ENCODE measurements at regions of chr4 and their contacts with region 1.

Region 1: DNA sequence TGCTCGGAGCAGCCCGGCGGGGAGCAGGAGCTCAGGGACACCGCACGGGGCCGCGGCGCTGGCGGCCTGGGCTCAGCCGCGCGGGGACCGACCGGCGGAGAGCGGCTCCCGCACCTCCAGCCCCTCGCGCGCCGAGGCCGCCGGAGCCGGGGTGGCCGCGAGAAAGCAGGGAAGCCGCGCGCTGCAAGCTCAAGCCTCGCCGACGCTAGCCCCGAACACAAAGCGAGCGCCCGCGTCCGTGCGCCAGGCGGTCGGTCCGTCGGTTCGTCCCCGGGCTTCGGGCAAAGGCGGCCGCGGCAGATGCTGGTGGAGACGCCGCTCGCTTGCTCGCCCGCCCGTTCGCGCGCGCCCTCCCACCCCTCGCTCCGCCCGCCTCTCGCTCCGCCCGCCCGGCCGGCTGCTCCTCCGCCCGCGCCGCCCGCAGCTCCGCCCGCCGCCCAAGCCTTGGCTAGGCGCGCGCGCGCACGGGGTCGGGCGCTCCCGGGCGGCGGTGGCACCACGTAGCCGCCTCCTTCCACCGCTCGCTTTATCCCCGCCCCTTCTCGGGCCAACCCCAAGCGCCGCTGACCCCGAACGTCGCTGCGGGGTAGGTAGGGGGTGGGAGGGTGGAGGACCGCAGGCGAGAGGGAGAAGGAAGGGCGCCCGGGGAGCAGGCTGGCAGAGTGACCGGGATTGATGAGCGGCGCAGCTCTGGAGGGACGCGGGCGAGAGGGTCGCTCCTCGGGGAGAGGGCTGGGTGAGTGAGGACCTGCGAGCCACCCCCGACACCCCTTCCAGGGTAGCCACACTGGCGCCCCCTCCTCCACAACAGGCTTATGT is at the start of gene TSPAN5:
- DNase-seq: peak; percentile 79
- ATAC-seq: peak; percentile 54
- H3K4me3 ChIP-seq: peak within 1 kb of the TSS; percentile 86
- H3K27ac ChIP-seq: peak within 1 kb of the TSS; percentile 99
- H3K4me1 ChIP-seq: peaks cover 61% of the 10 kb centered on the region
- H3K27me3 ChIP-seq: no peaks in the 10 kb centered on the region
- CTCF ChIP-seq: no peak
- total RNA-seq, gene TSPAN5: 41.8 and 50.3 TPM in 2 replicates

Region 2: DNA sequence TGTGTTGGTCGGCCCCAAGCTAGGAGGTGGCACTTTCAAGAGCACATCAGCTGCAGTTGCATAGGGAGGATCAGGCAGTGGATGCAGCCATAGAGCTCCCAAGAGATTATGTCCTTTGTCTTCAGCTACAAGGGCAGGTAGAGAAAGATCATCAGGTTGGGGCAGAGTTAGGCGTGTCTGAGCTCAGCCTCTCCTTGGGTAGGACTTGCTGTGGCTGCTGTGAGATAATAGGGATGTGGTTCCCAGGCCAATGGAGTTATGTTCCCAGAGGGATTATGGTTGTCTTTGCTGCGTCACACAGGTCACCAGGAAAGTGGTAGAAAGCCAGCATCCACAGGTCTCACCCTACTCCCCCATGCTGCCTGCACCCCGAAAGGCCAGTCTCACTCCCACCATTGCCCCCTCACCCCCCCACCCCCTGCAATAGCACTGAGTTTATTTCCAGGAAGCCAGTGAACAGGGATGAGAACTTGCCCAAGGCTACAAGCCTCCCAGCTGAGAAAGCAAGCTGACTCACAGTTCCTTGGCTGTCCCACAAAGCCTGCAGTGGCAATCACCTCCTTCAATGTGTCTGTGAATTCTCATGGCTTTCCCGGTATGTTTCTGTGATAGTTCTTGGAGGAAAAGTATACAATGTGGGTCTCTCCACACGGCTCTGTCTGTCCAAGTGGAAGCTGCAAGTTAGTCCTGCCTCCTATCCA is 663.6 kb before region 1 on chr4:
- CTCF ChIA-PET with region 1: no interaction called
- POLR2A ChIA-PET with region 1: no interaction called
- intact Hi-C with region 1: no loop called
- DNase-seq: peak; percentile 56
- ATAC-seq: no peak; the same call in 1 of the 2 replicates
- H3K4me3 ChIP-seq: no peak overlapping the region
- H3K27ac ChIP-seq: peak overlapping the region; percentile 73
- H3K4me1 ChIP-seq: no peaks in the 10 kb centered on the region; the same call in 1 of the 2 replicates
- H3K27me3 ChIP-seq: no peaks in the 10 kb centered on the region
- CTCF ChIP-seq: no peak

Region 3: DNA sequence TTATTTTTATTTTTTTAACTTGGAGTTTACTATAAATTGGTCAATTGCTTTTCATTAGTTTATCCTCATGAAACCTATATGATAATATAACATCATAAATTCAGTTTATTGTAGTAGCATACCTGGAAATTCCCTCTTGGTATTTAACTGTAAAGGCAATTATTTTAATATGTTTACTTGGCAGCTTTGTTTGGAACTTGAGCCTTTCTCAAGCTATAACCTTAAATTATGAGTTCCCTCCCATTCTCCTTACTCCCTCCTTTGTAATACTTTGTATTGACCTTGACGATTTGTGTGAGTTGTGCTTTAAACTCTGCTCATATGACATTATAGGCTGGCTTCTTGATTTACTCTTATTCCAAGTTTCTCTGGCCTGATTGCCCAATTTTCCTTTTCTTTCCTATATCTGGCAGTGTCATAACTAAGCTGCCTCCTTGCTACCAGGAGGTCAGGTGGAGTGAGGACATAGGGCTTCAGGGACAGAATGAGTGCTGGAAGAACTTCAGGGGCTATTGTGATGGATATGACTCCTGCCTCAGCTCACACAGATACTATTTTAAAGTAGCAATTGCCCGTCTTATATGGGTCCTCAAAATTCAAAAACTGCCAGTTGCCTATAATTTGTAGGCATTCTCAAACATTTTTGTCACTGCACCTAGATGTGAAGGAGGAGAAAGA is 319.6 kb before region 1 on chr4:
- CTCF ChIA-PET with region 1: no interaction called
- POLR2A ChIA-PET with region 1: no interaction called
- intact Hi-C with region 1: loop called (anchors 10 kb)
- DNase-seq: no peak
- ATAC-seq: peak; percentile 58
- H3K4me3 ChIP-seq: no peak overlapping the region
- H3K27ac ChIP-seq: no peak overlapping the region
- H3K4me1 ChIP-seq: no peaks in the 10 kb centered on the region
- H3K27me3 ChIP-seq: no peaks in the 10 kb centered on the region
- CTCF ChIP-seq: no peak

Region 4: DNA sequence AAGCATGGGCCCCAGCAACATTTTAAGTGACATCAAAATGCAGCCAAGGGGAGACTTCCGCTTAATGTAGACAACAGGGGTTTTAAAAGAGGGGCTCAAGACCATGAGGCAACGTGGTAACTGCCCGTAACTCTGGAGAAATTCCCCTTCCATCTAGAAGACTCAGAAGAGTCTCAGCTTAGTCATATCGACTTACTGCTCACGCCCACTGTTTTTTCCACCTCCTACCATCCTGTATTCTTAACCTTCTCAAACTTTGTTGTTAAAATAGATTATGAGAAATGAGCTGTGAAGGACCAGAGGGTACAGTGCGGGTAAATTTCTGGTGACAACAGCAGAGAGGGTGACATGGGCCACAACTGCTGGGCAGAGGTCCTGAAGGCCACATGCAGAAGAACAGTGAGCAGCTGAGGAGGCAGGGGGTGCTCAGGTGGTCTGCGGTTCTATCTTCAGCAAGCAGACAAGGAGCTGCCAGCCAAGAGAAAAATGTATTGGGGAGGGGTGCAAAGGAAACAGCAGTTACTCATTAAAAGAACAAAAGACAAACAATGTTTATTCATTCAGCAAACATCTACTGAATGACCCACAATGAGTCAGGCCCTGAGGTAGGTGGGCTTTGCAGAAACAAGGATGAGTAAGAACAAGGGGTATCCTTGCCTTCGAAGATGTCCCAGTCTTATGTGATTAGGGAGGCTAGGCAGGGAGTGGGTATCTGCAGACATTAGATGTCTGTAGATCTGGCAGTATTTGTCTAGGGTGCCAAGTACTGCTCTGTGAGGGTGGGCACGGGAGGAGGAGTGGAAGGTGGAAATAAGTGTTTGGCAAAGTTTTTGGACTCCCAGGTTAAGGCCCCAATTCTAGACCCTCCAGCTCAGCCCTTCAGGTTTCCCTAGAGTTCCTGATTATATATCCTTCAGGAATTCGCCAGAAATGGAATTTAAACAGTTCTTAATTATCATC is 175.4 kb before region 1 on chr4:
- CTCF ChIA-PET with region 1: interaction called, 3 read pairs
- POLR2A ChIA-PET with region 1: no interaction called
- intact Hi-C with region 1: loop called (anchors 1 kb)
- DNase-seq: peak; percentile 82
- ATAC-seq: peak; percentile 68
- H3K4me3 ChIP-seq: peak overlapping the region; percentile 58
- H3K27ac ChIP-seq: peak overlapping the region; percentile 97
- H3K4me1 ChIP-seq: peaks cover 61% of the 10 kb centered on the region
- H3K27me3 ChIP-seq: no peaks in the 10 kb centered on the region
- CTCF ChIP-seq: no peak

Region 5: GRCh38 chr4:98626350-98626749 is 32.1 kb before region 1 on chr4:
- CTCF ChIA-PET with region 1: no interaction called
- POLR2A ChIA-PET with region 1: interaction called, 5 read pairs
- intact Hi-C with region 1: loop called (anchors 1 kb)
- DNase-seq: peak; percentile 89
- ATAC-seq: peak; percentile 91
- H3K4me3 ChIP-seq: peak overlapping the region; percentile 54
- H3K27ac ChIP-seq: peak overlapping the region; percentile 96
- H3K4me1 ChIP-seq: peaks cover 57% of the 10 kb centered on the region
- H3K27me3 ChIP-seq: no peaks in the 10 kb centered on the region
- CTCF ChIP-seq: peak; percentile 41

Region 6: DNA sequence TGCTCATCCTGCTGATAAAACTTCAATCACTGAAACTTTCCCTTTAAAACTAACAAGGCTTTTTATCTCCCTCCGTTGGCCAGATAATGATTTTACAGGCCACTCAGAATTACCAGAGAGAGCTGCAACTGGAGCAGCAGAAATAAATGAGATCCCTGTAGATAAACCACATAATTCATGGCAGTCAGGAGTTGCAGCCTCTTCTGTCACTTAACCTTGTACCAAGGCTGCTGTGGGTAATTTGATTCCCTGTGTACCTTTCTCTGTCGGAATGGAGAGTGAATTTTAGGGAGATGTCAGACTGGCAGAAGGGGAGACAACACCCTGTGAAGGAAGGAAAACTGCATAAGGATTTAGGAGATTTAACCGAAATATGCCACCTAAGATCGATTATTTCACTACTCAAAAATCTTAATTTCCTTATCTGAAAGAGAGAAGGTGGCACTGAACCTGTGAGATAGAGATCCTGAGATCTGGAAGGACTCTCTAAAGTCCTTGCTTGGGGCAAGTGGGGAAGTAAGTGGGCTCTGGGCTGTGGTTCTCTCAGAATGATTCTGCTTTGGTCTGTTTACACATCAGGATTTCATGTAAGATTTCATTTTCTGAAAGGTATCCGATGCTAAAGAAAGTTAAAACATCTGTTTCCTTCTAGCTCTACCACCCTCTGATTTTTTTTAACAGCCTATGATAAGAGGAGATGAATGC is 14.2 kb after region 1 on chr4:
- CTCF ChIA-PET with region 1: no interaction called
- POLR2A ChIA-PET with region 1: no interaction called
- intact Hi-C with region 1: no loop called
- DNase-seq: no peak
- ATAC-seq: no peak
- H3K4me3 ChIP-seq: no peak overlapping the region
- H3K27ac ChIP-seq: no peak overlapping the region
- H3K4me1 ChIP-seq: no peaks in the 10 kb centered on the region
- H3K27me3 ChIP-seq: no peaks in the 10 kb centered on the region
- CTCF ChIP-seq: no peak

Region 7: GRCh38 chr4:98720871-98721480 is 62.5 kb after region 1 on chr4:
- CTCF ChIA-PET with region 1: no interaction called
- POLR2A ChIA-PET with region 1: interaction called, 3 read pairs
- intact Hi-C with region 1: loop called (anchors 2 kb)
- DNase-seq: peak; percentile 91
- ATAC-seq: peak; percentile 75
- H3K4me3 ChIP-seq: peak overlapping the region; percentile 51; the same call in 1 of the 2 replicates
- H3K27ac ChIP-seq: peak overlapping the region; percentile 90
- H3K4me1 ChIP-seq: peaks cover 25% of the 10 kb centered on the region
- H3K27me3 ChIP-seq: no peaks in the 10 kb centered on the region
- CTCF ChIP-seq: no peak

Measured in PC-3 (cell line).